Pancreas (tissue), 10 donors: ENCODE measurements at regions of chr17 and their contacts with region 1.

Region 1: DNA sequence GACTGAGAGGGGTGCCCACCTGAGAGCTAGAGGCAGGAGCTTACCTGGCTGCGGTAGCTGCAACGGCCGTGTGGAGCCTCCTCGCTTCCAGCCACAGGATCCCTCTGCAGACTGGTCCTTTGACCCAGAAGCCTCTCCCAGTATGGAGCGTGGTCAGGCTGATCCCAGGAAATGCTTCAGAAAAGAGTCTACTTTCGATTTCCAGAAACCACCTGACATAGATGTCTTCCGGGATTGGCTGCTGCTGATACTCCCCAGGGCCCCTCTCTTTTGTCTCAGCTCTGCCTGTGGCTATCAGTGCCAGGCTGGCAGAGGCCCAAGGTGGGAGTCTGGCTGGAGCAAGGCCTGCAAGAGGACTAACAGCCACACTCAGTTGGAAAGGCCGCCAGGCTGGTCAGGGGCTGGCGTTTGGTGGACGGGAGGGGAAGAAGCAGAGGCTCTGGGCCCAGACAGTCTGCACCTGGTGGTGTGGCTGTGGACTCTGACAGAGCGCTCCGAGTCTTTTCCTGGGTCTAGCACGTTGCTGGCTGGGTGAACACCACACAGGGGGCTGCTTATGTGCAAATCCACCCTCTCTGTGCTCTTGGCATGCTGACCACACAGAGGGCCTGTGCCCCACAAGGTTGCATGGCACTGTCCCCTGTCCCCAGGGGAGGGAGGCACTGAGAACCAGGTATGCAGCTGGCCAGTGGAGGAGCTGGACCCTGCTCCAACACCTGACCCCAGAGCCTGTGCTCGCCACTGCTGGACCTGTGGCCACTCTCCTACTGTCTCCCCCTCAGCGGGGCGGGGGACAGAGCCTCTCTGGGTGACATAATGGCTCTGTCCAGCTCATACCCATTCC is at the start of gene LGALS3BP:
- DNase-seq: peak; percentile 57 to 86 (median 72)
- ATAC-seq: peak; percentile 39 to 83 (median 77)
- H3K4me3 ChIP-seq: peak within 1 kb of the TSS in 2 of 4 donors; percentile 24 to 40
- H3K27ac ChIP-seq: peak within 1 kb of the TSS; percentile 45 to 76 (median 52)
- H3K4me1 ChIP-seq: peaks cover 0 to 11% (median 6%) of the 10 kb centered on the region in 3 donors
- H3K27me3 ChIP-seq: no peaks in the 10 kb centered on the region
- CTCF ChIP-seq: no peak
- total RNA-seq, gene LGALS3BP: 35.3 to 169 (median 71.4) TPM

Region 2: DNA sequence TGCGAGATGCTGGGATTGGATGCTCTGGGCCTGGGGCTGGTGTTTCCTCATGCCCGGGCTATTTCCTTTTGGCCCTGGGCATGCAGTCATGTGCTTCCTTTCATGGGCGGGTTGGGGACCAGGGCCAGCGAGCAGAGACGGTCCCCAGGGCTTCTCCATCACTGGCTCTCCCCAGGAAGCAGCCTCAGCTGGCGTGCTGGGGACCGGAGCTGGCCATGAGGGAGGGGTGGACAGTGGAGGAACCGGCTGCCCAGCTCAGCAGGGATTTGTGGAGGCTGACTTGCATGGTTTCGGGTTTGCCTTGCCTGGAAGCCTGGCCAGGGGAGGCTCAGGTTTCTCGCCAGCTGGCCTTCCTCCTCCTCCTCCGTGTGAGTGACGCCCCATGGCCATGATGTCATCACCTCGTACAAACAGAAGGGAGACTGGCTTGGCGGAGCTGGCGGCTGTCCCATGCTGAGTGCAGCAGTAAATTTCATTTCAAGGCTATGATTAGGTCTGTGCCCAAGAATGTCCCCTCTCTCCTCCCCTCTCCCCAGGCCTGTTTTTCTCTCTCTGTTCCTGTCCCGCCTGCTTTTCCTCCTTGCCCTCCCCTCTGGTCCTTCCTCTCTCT is 45.9 kb before region 1 on chr17:
- intact Hi-C with region 1: loop called in 1 of 3 experiments (anchors 10 kb)
- DNase-seq: peak; percentile 91 to 99 (median 98)
- ATAC-seq: peak; percentile 91 to 95 (median 94)
- H3K4me3 ChIP-seq: peak overlapping the region in 1 of 4 donors; percentile 35
- H3K27ac ChIP-seq: peak overlapping the region; percentile 63 to 96 (median 91)
- H3K4me1 ChIP-seq: peaks cover 7 to 19% (median 10%) of the 10 kb centered on the region in 3 donors
- H3K27me3 ChIP-seq: no peaks in the 10 kb centered on the region
- CTCF ChIP-seq: no peak

Region 3: DNA sequence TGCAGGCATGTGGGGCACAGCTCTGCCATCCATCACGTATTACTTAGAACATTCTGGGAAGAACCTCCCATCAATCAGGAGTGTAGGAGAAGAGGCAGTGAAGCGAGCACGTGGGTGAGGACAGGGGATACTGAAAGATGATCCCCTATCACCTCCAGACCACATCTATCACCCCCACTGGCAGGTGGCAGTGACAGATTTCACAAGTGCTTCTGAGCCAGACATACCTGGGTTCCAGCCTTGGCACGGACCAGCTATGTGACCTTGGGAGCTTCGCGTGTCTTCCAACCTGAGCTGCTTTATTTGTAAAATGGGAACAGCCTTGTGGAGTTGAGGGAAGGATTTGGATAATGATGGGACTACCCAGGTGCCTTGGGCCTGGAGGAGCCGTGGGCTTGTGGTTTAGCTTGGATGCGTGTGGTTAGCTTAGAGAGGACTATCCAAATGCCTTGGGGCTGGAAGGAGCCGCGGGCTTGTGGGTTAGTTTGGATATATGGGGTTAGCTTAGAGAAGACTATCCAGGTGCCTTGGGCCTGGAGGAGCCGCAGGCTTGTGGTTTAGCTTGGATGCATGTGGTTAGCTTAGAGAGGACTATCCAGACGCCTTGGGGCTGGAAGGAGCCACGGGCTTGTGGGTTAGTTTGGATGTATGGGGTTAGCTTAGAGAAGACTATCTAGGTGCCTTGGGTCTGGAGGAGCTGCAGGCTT is 301.0 kb after region 1 on chr17:
- intact Hi-C with region 1: no loop called
- DNase-seq: no peak
- ATAC-seq: no peak
- H3K4me3 ChIP-seq: no peak overlapping the region
- H3K27ac ChIP-seq: no peak overlapping the region
- H3K4me1 ChIP-seq: peaks cover 0 to 5% (median 4%) of the 10 kb centered on the region in 3 donors
- H3K27me3 ChIP-seq: peaks cover 0 to 8% (median 0%) of the 10 kb centered on the region in 4 donors
- CTCF ChIP-seq: no peak